ENCODE measurements at regions of chr14 and their contacts with region 1.

Region 1: DNA sequence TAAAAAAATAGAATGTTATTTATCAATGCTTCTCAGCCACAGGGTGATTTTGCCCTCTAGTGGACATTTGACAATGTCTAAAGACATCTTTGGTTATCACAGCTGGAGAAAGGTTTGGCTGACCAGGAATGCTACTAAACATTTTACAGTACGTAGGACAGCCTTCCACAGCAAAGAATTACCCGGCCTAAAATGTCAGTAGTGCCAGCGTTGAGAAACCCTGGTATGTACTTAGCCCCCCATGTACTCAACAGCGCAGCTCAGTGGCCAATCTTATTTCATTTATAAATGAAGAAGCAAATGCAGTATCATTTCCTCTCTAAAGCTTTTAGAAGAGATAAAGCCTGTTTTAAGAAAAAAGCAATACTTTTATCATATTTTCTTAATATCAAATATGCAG is 5.8 kb downstream of the MARK3 start:
- H3K4me3 ChIP-seq: no peak overlapping the region
- H3K27ac ChIP-seq: no peak overlapping the region
- H3K4me1 ChIP-seq: peaks cover 22% of the 10 kb centered on the region
- CTCF ChIP-seq: peak; percentile 45; the same call in 1 of the 2 replicates

Region 2: DNA sequence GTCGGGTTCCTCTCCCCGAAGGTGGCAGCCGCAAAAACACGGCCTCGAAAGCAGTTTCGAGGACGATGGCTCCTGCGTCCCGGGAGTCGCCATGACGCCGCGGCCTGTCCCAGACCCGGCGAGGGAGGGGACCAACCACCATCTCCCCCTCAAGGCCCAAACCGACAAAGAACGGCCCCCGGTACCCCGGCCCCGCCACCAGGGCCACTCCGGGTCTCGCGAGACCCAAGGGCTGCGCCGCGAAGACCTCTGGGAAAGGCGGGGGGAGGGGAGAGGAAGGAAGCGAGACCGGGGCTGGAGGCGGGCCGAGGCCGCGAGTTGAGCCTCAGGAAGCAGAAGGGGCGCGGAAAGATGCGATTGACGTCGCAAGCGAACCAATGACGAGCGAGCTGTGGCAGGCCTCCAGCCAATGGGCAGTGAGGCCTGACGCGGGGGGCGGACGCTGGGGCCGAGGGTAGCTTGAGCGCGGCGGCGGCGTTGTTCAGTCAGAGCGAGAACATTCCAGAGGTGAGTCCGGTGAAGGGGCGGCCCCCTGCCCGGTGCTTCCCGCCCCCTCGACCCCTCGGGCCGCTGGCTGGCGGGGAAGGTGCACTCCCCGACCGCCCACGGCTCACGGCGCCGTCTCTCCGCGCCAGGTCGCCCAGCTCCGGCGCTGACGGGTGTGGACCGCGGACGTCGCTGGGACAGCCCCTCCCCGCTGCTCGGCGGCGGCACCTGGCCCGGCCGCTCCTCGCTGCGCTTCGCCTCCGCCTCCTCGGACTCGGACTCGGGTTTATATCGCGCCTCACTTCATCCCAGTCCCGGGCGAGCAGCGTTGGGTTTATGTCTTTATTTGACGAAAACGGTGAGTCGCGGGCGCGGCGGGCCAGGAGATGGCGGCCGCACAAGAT is 57.0 kb before region 1 on chr14 and contains the start of gene EIF5:
- CTCF ChIA-PET with region 1: interaction called, 6 read pairs
- POLR2A ChIA-PET with region 1: interaction called, 17 read pairs
- H3K4me3 ChIP-seq: peak within 1 kb of the TSS; percentile 99
- H3K27ac ChIP-seq: peak within 1 kb of the TSS; percentile 94
- H3K4me1 ChIP-seq: peaks cover 6% of the 10 kb centered on the region; the same call in 1 of the 2 replicates
- CTCF ChIP-seq: peak; percentile 76

Region 3: DNA sequence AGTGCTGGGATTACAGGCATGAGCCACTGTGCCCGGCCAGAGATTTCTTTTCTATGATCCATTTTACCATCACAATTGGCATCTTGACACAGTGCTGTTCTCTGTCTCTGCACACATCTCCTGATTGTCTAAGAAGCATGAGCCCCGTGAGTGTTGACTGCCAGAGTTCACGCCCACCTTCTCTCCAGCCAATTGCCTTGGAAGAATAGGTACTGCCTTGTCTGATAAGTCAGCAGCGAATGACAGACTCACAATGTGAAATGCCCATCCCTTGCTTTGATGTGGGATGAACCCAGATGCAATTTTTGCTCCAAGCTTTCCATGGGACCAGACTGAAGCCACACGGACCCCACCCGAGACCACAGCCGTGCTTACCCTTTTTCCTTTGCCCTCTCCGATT is 37.7 kb before region 1 on chr14:
- CTCF ChIA-PET with region 1: interaction called, 8 read pairs
- POLR2A ChIA-PET with region 1: interaction called, 10 read pairs
- H3K4me3 ChIP-seq: no peak overlapping the region
- H3K27ac ChIP-seq: no peak overlapping the region
- H3K4me1 ChIP-seq: peaks cover 3% of the 10 kb centered on the region; the same call in 1 of the 2 replicates
- CTCF ChIP-seq: no peak

Region 4: GRCh38 chr14:103402695-103403094 is 11.6 kb after region 1 on chr14:
- CTCF ChIA-PET with region 1: interaction called, 49 read pairs
- POLR2A ChIA-PET with region 1: no interaction called
- H3K4me3 ChIP-seq: no peak overlapping the region
- H3K27ac ChIP-seq: no peak overlapping the region
- H3K4me1 ChIP-seq: peaks cover 49% of the 10 kb centered on the region
- CTCF ChIP-seq: no peak

Region 5: DNA sequence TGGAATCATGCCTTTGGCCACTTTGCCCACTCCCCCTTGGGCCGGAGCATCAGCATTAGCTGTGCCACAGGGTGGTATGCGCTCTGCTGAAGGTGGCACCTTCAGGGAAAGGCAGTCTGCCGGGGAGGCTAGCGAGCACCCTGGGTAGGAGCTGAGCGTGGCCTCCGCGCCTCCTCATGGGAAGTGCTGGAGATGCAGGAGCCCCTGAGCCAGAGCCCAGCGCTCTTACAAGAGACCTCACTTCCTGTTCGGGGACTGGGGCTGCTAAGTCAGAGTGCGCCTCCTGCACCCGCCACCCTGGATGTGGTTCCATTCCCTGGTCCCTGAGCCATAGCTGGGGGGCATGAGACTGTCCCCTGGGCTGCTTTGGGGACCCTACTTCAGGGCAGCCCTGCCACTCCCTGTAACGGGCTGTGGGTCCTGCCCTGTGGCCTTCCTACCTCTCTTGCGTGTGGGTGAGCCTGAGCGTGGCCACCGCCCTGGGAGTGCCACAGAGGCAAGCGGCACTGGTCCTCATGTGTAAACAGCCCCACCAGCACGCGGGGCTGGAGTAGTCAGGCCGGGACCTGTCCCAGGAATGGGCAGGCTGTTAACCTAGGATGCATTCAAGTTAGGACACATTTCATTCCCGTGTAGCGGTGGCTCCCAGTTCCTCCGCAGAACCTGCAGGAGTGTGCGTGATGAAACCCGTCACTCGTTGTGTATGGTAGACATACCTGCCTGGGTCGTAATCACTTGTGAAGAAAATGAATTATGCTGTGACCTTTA is 191.1 kb after region 1 on chr14:
- CTCF ChIA-PET with region 1: no interaction called
- POLR2A ChIA-PET with region 1: no interaction called
- H3K4me3 ChIP-seq: no peak overlapping the region
- H3K27ac ChIP-seq: no peak overlapping the region
- H3K4me1 ChIP-seq: no peaks in the 10 kb centered on the region; the same call in 1 of the 2 replicates
- CTCF ChIP-seq: no peak

Region 6: GRCh38 chr14:103594265-103594664 is 203.2 kb after region 1 on chr14:
- CTCF ChIA-PET with region 1: no interaction called
- POLR2A ChIA-PET with region 1: no interaction called
- H3K4me3 ChIP-seq: no peak overlapping the region
- H3K27ac ChIP-seq: no peak overlapping the region
- H3K4me1 ChIP-seq: peaks cover 8% of the 10 kb centered on the region
- CTCF ChIP-seq: no peak

Region 7: GRCh38 chr14:104184911-104185499 is 794.0 kb after region 1 on chr14:
- CTCF ChIA-PET with region 1: no interaction called
- POLR2A ChIA-PET with region 1: no interaction called
- H3K4me3 ChIP-seq: no peak overlapping the region
- H3K27ac ChIP-seq: no peak overlapping the region
- H3K4me1 ChIP-seq: no peaks in the 10 kb centered on the region
- CTCF ChIP-seq: no peak

Measured in HEK293 (cell line).